ENCODE measurements at regions of chr1 and their contacts with region 1.

Region 1: GRCh38 chr1:1906185-1907097 is 8.6 kb upstream of the CALML6 start:
- DNase-seq: peak; percentile 44 to 92
- H3K4me3 ChIP-seq: no peak overlapping the region
- H3K27ac ChIP-seq: peak overlapping the region in 1 of 2 donors; percentile 33
- H3K4me1 ChIP-seq: peaks cover 4 to 22% of the 10 kb centered on the region in 2 donors
- H3K27me3 ChIP-seq: no peaks in the 10 kb centered on the region
- CTCF ChIP-seq: peak; percentile 89 to 94 (median 90)

Region 2: DNA sequence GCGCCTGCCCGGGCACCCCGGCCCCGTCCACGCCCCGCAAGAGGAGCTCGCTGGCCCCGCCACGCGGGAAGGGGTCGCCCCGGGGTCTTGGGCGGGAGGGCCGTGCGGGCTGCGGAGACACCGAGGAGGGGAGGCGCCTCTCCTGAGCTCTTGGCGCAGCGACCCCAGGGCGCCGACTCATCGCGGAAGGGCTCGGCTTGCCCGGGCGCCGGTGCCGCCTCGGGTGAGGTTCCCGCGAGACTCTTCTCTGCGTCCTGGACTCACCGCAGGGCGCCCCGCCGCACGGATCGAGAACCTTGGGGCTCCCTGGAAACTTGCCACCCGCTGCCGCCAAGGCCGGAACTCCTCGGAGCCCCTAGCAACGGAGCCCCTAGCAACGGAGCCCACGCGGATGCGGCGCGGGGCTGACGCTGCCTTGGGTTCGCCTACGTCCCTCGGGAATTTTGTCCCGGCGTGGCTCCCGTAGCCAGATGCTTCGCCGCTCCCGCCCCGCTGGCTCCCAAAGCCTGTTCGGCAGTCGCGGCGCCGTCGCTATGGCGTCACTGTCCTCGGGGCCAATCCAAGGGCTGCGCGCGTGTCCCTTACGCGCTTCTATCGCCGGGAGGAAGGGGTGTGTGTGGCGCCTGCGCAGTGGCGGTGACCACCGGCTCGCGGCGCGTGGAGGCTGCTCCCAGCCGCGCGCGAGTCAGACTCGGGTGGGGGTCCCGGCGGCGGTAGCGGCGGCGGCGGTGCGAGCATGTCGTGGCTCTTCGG is 394.7 kb before region 1 on chr1 and contains the start of gene ATAD3A:
- intact Hi-C with region 1: loop called (anchors 5 kb)
- DNase-seq: peak; percentile 89 to 99
- H3K4me3 ChIP-seq: peak within 1 kb of the TSS; percentile 81
- H3K27ac ChIP-seq: peak within 1 kb of the TSS; percentile 85 to 93
- H3K4me1 ChIP-seq: peaks cover 0 to 7% of the 10 kb centered on the region in 2 donors
- H3K27me3 ChIP-seq: no peaks in the 10 kb centered on the region
- CTCF ChIP-seq: no peak
- total RNA-seq, gene ATAD3A: 46.3 TPM

Region 3: DNA sequence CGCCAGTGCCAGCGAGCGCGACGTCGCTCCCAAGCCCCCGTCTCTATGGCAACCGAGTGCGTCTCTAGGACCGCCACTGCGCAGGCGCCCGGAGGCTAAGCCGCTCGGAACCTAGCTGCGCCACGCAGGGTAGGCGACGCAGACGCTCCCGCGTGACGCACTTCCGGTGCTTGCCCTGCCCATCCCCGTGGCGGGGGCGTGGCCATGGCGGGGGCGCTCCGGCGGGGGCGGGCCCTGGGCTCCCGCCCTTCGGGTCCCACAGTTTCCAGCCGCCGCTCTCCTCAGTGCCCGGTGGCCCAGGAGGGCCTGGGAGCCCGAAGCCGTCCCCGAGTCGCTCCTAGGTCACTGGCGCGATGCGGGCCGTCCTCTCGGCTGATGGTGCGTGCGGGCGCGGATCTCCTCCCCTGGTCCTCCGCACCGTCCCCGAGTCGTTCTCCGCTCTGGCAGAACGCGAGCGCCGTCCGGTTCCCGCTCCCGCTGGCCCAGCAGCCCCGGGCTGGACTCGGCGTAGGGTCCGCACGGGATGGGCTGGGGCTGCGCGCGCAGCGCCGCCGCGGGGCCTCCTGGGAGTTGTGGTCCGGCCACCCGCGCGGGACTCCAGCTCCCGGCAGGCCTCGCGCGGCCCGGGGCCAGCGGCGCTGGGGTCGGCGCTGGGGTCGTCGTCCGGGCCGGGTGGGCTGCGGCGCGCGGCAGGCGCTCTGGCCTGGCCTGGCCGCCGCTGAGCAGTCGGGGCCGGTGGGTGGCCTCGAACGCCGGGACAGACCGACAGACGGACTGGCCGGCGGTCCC is 291.0 kb before region 1 on chr1 and contains the start of gene MIB2:
- intact Hi-C with region 1: loop called (anchors 5 kb)
- DNase-seq: peak; percentile 74 to 97
- H3K4me3 ChIP-seq: peak within 1 kb of the TSS; percentile 97 to 100
- H3K27ac ChIP-seq: peak within 1 kb of the TSS; percentile 100
- H3K4me1 ChIP-seq: peaks cover 15 to 25% of the 10 kb centered on the region in 2 donors
- H3K27me3 ChIP-seq: no peaks in the 10 kb centered on the region
- CTCF ChIP-seq: peak in 1 of 3 experiments; percentile 18
- total RNA-seq, gene MIB2: 96.9 TPM

Region 4: GRCh38 chr1:1687846-1688245 is 218.6 kb before region 1 on chr1:
- intact Hi-C with region 1: no loop called
- DNase-seq: no peak
- H3K4me3 ChIP-seq: no peak overlapping the region
- H3K27ac ChIP-seq: no peak overlapping the region
- H3K4me1 ChIP-seq: peaks cover 6 to 9% of the 10 kb centered on the region in 2 donors
- H3K27me3 ChIP-seq: no peaks in the 10 kb centered on the region
- CTCF ChIP-seq: no peak

Region 5: GRCh38 chr1:1748686-1749321 is 157.6 kb before region 1 on chr1:
- intact Hi-C with region 1: loop called (anchors 5 kb)
- DNase-seq: no peak
- H3K4me3 ChIP-seq: no peak overlapping the region
- H3K27ac ChIP-seq: no peak overlapping the region
- H3K4me1 ChIP-seq: no peaks in the 10 kb centered on the region
- H3K27me3 ChIP-seq: no peaks in the 10 kb centered on the region
- CTCF ChIP-seq: no peak

Region 6: DNA sequence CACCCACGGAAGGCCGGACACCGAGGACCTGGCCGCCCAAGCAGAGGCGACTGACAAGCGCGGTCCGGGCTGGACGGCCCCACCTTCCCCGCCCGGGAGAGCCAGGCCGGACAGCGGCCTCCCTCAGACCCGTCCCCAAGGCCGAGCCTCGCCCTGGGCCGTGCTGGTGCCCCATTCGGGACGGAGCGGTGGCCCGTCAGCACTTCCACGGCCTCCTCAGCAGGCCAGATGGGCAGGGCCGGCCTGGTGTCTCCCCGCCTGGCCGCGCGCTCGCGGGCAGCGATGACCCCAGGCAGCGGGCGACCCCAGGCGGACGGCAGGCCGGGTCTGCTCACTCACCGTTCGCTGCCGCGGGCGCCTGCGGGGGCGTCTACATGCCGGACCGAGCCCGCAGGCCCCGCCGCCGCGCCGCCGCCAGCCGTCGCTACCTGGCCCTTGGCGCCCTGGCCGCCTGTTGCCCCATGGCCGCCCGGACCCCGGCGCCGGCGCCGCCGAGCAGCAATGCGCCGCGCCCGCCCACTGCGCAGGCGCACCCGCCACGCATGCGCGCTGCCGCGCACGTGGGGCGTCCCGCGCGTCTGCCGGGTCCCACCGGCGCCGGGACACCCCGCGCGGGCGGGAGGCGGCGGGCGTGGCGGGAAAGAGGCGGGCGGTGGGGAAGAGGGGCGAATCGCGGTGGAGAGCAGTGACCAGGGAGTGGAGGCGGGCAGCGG is 128.3 kb before region 1 on chr1 and contains the start of gene NADK:
- intact Hi-C with region 1: loop called (anchors 1 kb)
- DNase-seq: peak in 1 of 2 donors; percentile 77
- H3K4me3 ChIP-seq: peak within 1 kb of the TSS; percentile 89 to 91
- H3K27ac ChIP-seq: peak within 1 kb of the TSS; percentile 92 to 95
- H3K4me1 ChIP-seq: peaks cover 13 to 51% of the 10 kb centered on the region in 2 donors
- H3K27me3 ChIP-seq: no peaks in the 10 kb centered on the region
- CTCF ChIP-seq: peak in 1 of 3 experiments; percentile 32
- total RNA-seq, gene NADK: 104 TPM

Region 7: DNA sequence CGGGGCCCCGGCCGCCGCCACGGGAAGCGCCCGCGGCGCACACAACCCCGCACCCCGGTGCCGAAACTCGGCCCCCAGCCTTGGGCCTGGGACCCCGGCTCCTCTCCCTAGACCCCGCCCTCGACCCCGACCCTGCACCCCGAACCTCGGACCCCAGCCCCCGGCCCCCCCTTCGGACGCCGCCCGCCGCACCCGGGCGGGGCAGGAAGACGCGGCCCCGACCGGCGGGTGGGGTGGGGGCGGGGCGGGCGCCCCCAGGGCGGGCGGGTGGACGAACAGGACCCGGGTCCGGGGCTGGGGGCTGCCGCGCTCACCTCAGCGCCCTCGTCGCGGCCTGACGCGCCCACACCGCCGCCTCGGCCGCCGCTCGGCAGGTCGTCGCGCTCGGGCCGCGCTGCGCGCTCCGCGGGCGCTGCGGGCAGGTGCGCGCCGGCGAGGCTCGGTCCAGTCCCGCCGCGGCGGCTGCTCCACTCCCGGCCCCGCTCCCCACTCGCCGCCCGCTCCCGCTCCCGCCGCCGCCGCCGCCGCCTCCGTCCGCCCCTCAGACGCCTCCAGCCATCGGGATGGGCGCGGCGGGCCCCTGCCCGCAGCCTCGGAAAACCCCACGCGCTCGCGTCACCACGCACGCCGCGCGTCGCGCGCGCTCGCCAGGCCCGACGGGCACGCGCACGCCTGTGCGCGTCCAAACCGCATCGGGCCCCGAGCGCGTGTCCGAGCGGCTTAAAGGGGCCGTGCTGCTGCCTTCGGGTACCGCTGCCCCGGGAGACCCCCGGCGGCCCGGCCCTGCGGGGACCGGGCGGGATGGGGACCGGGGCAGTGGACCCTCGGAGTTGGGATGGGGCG is 15.7 kb before region 1 on chr1 and contains the start of gene GNB1:
- intact Hi-C with region 1: loop called (anchors 1 kb)
- DNase-seq: peak; percentile 54 to 92
- H3K4me3 ChIP-seq: peak within 1 kb of the TSS; percentile 83 to 95
- H3K27ac ChIP-seq: peak within 1 kb of the TSS; percentile 93 to 94
- H3K4me1 ChIP-seq: peaks cover 0 to 48% of the 10 kb centered on the region in 2 donors
- H3K27me3 ChIP-seq: no peaks in the 10 kb centered on the region
- CTCF ChIP-seq: no peak
- total RNA-seq, gene GNB1: 170 TPM

Region 8: GRCh38 chr1:1919304-1920056 is 13.0 kb after region 1 on chr1:
- intact Hi-C with region 1: loop called (anchors 1 kb)
- DNase-seq: peak; percentile 88 to 97
- H3K4me3 ChIP-seq: peak overlapping the region; percentile 54 to 71
- H3K27ac ChIP-seq: peak overlapping the region in 1 of 2 donors; percentile 3
- H3K4me1 ChIP-seq: peaks cover 7% of the 10 kb centered on the region in 2 donors
- H3K27me3 ChIP-seq: no peaks in the 10 kb centered on the region
- CTCF ChIP-seq: no peak

Region 9: GRCh38 chr1:1966071-1966740 is 59.8 kb after region 1 on chr1:
- intact Hi-C with region 1: no loop called
- DNase-seq: no peak
- H3K4me3 ChIP-seq: no peak overlapping the region
- H3K27ac ChIP-seq: no peak overlapping the region
- H3K4me1 ChIP-seq: no peaks in the 10 kb centered on the region
- H3K27me3 ChIP-seq: no peaks in the 10 kb centered on the region
- CTCF ChIP-seq: no peak